Common myeloid progenitor, CD34-positive (primary cell): ENCODE measurements at regions of chr3 and their contacts with region 1.

Region 1: DNA sequence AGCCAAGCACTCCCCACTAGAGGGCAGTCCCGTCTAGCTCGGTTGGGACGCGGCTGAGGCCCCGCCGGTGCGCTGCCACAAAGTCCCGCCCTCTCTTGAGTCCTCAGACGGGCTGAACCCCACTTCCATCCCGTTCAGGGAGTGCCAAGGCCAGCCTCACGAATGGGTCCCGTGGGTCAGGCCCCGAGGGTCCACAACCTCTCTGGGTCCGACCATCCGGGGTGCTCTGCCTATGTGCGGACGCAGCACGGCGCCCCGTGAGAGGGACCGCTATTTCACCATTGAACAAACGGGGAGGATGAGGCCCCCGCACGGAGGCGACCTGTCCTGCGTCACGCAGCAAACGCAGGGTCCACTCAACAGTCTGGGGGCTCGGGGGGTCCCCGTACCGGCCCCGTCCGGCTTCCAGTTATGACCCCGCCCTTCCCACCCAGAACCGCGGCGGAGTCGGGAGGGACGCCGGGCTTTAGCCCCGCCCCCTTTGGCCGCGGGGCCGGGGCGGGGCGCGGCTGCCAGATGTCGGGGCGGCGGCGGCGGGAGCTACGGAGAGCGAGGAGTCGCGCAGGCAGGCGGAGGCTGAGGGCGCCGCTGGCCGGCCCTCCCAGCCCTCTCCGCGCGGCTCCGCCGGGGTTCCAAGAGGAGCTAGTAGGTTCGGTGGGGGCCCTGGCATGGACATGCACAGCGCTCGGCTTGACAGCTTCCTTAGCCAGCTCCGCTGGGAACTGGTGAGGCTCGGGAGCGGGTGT is at the start of gene INKA1:
- DNase-seq: peak; percentile 88 to 92 (median 91)
- H3K4me3 ChIP-seq: peak within 1 kb of the TSS; percentile 72 to 95 (median 86)
- H3K27ac ChIP-seq: peak within 1 kb of the TSS; percentile 68 to 92
- H3K4me1 ChIP-seq: peaks cover 7 to 49% (median 46%) of the 10 kb centered on the region in 4 experiments
- H3K27me3 ChIP-seq: no peaks in the 10 kb centered on the region

Region 2: DNA sequence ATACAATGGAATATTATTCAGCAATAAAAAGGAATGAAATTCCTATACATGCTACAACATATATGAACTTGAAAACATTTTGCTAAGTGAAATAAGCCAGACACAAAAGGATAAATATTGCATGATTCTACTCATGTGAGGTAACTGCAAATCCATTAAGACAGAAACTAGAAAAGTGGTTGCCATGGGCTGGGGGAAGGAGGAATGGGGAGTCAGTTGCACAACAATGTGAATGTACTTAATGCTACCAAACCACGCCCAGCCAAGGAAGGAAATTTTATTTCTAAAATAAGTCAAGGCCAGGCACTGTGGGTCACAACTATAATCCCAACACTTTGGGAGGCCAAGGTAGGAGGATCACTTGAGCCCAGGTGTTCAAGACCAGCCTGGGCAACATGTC is 69.3 kb before region 1 on chr3:
- CTCF ChIA-PET with region 1: no interaction called
- POLR2A ChIA-PET with region 1: no interaction called
- DNase-seq: no peak
- H3K4me3 ChIP-seq: no peak overlapping the region
- H3K27ac ChIP-seq: no peak overlapping the region
- H3K4me1 ChIP-seq: no peaks in the 10 kb centered on the region
- H3K27me3 ChIP-seq: no peaks in the 10 kb centered on the region

Region 3: DNA sequence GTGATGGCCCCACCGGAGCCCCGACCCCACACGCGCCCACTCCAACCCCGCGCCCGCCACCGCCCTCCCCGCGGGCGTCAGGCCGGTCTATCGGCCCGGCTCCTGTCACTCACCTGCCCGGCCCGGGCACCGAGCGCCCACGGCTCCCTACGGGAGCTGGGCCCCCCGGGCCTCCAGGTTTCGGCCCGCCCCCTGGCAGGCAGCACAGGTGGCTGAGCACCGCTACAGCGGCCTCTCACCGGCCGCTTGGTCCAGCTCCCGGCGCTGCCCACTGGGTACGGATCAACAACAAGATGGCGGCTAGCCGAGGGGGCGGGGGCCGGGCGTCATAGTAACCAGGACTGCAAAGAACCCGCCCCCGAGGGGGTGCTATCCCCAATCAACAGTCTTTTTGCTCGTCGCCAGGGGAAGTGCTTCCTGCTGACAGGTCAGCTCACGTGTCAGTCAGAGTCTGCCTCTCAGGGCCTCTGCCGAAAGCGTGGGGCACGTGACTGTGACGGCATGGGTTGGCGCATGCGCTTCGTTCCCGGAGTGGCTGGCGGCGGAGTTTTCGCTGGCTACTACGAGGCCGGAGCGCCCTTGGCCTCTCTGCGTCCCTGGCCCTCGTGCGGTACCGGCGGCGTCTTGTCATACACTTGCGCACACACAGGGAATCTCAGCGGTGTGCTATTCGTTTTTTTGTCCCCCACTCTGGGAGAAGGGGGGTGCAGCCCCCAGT is 16.5 kb before region 1 on chr3 and contains the start of gene IP6K1:
- CTCF ChIA-PET with region 1: interaction called, 28 read pairs
- POLR2A ChIA-PET with region 1: interaction called, 11 read pairs
- DNase-seq: peak; percentile 100
- H3K4me3 ChIP-seq: peak within 1 kb of the TSS; percentile 67 to 93 (median 89)
- H3K27ac ChIP-seq: peak within 1 kb of the TSS; percentile 94 to 96
- H3K4me1 ChIP-seq: peaks cover 5 to 40% (median 31%) of the 10 kb centered on the region in 4 experiments
- H3K27me3 ChIP-seq: no peaks in the 10 kb centered on the region

Region 4: DNA sequence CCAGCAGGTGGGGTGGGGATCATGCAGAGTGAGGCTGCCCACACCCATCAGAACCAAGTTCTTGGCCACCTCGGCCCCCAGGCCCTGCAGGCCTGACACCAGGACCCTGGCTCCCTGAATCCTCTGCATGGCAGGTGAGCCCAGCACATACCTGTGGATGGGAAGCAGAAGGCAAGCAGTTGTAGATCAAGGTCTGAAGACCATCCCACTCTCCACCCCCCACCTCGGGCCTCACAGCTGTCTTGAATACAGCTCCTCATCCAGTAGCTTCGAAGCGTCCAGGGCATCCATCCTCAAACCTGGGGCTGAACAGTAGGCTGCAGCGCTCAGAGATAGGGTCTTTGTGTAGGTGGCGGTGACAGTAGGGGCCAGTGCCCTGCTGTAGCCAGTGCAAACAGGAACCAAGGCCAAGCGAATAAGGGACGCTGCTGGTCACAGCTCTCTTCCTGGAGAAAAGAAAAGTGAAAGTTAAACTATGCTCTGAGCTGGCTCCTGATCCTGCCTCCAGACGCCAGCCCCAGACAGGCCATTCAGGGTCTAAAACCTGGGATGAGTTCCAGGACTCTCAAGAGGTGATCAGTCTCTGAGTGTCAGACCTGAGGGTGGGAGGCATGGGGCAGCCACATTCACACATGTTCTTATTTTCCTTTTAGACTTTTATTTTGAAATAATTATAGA is 10.7 kb after region 1 on chr3 and contains the start of gene UBA7:
- CTCF ChIA-PET with region 1: interaction called, 34 read pairs
- POLR2A ChIA-PET with region 1: interaction called, 20 read pairs
- DNase-seq: peak in 2 of 3 donors; percentile 69 to 77
- H3K4me3 ChIP-seq: peak within 1 kb of the TSS; percentile 34 to 87 (median 74)
- H3K27ac ChIP-seq: peak within 1 kb of the TSS; percentile 78 to 92
- H3K4me1 ChIP-seq: peaks cover 8 to 71% (median 60%) of the 10 kb centered on the region in 4 experiments
- H3K27me3 ChIP-seq: no peaks in the 10 kb centered on the region

Region 5: GRCh38 chr3:49826016-49826415 is 23.1 kb after region 1 on chr3:
- CTCF ChIA-PET with region 1: interaction called, 807 read pairs
- POLR2A ChIA-PET with region 1: no interaction called
- DNase-seq: no peak
- H3K4me3 ChIP-seq: no peak overlapping the region
- H3K27ac ChIP-seq: no peak overlapping the region
- H3K4me1 ChIP-seq: peaks cover 0 to 18% (median 11%) of the 10 kb centered on the region in 4 experiments
- H3K27me3 ChIP-seq: no peaks in the 10 kb centered on the region

Region 6: GRCh38 chr3:49882166-49882565 is 79.3 kb after region 1 on chr3:
- CTCF ChIA-PET with region 1: interaction called, 10 read pairs
- POLR2A ChIA-PET with region 1: no interaction called
- DNase-seq: no peak
- H3K4me3 ChIP-seq: no peak overlapping the region
- H3K27ac ChIP-seq: no peak overlapping the region
- H3K4me1 ChIP-seq: peaks cover 0 to 6% (median 0%) of the 10 kb centered on the region in 4 experiments
- H3K27me3 ChIP-seq: no peaks in the 10 kb centered on the region

Region 7: GRCh38 chr3:49906004-49906743 is 103.3 kb after region 1 on chr3:
- CTCF ChIA-PET with region 1: interaction called, 15 read pairs
- POLR2A ChIA-PET with region 1: interaction called, 3 read pairs
- DNase-seq: peak; percentile 66 to 80 (median 79)
- H3K4me3 ChIP-seq: peak overlapping the region in 5 of 7 experiments; percentile 23 to 70 (median 44)
- H3K27ac ChIP-seq: peak overlapping the region in 1 of 2 experiments; percentile 17
- H3K4me1 ChIP-seq: peaks cover 0 to 22% (median 20%) of the 10 kb centered on the region in 4 experiments
- H3K27me3 ChIP-seq: no peaks in the 10 kb centered on the region

Region 8: GRCh38 chr3:50068134-50068533 is 265.2 kb after region 1 on chr3:
- CTCF ChIA-PET with region 1: no interaction called
- POLR2A ChIA-PET with region 1: no interaction called
- DNase-seq: no peak
- H3K4me3 ChIP-seq: no peak overlapping the region
- H3K27ac ChIP-seq: no peak overlapping the region
- H3K4me1 ChIP-seq: no peaks in the 10 kb centered on the region
- H3K27me3 ChIP-seq: no peaks in the 10 kb centered on the region

Region 9: DNA sequence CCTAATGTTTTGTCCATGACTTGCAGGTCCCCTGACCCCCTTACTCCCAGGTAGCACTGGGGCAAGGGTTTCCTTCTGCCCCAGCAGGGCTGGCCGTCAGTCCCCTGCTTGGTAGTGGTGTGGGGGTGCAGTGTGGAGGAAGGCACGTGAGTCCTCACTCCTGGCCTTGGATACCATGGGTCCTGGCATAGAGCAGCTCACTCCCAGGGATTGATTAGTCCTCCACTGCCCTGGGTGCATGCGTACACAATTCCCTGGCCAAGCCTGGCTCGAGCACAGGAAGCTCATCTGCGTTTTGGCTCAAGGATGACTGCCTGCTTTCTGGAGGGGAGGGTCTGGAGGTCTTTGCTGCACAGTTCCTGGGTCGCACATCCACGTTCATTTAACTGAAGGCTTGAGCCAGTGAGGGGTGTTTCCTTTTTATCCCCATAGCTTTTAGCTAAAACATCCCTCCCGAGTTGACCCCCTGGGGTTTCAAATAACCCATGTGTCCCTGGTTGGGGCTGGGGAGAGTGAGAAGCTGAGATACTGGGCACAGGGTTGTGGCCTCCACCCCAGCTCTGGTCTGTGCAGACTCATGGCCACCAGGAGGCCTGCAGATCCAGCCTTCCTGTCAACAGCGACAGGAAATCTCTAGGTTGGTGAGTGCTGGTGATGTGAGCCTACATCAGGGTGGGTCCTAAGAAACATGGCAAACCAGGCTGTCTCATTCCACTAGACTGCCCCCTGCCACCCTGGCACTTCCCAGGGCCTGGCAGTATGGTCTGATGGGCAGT is 778.0 kb after region 1 on chr3:
- CTCF ChIA-PET with region 1: no interaction called
- POLR2A ChIA-PET with region 1: no interaction called
- DNase-seq: no peak
- H3K4me3 ChIP-seq: no peak overlapping the region
- H3K27ac ChIP-seq: no peak overlapping the region
- H3K4me1 ChIP-seq: peaks cover 0 to 14% (median 5%) of the 10 kb centered on the region in 4 experiments
- H3K27me3 ChIP-seq: no peaks in the 10 kb centered on the region